Right cardiac atrium (tissue), 5 donors: ENCODE measurements at regions of chrX and their contacts with region 1.

Region 1: GRCh38 chrX:40266490-40267333 is 169.0 kb upstream of the BCOR start:
- DNase-seq: peak; percentile 69 to 88 (median 86)
- ATAC-seq: peak; percentile 88
- H3K4me3 ChIP-seq: peak overlapping the region; percentile 36
- H3K27ac ChIP-seq: peak overlapping the region; percentile 54
- H3K4me1 ChIP-seq: peaks cover 15% of the 10 kb centered on the region
- H3K27me3 ChIP-seq: no peaks in the 10 kb centered on the region

Region 2: GRCh38 chrX:39946822-39947221 is 319.9 kb before region 1 on chrX:
- intact Hi-C with region 1: no loop called
- DNase-seq: no peak
- ATAC-seq: no peak
- H3K4me3 ChIP-seq: no peak overlapping the region
- H3K27ac ChIP-seq: no peak overlapping the region
- H3K4me1 ChIP-seq: no peaks in the 10 kb centered on the region
- H3K27me3 ChIP-seq: no peaks in the 10 kb centered on the region

Region 3: GRCh38 chrX:40083120-40083978 is 183.4 kb before region 1 on chrX:
- intact Hi-C with region 1: loop called in 1 of 4 experiments (anchors 10 kb)
- DNase-seq: peak in 2 of 3 donors; percentile 73
- ATAC-seq: peak; percentile 46 to 53
- H3K4me3 ChIP-seq: peak overlapping the region; percentile 35
- H3K27ac ChIP-seq: no peak overlapping the region
- H3K4me1 ChIP-seq: peaks cover 18% of the 10 kb centered on the region
- H3K27me3 ChIP-seq: no peaks in the 10 kb centered on the region

Region 4: GRCh38 chrX:40169193-40170101 is 97.3 kb before region 1 on chrX:
- intact Hi-C with region 1: loop called in 2 of 4 experiments (anchors 10 kb)
- DNase-seq: peak in 2 of 3 donors; percentile 81
- ATAC-seq: peak in 1 of 2 donors; percentile 2
- H3K4me3 ChIP-seq: no peak overlapping the region
- H3K27ac ChIP-seq: no peak overlapping the region
- H3K4me1 ChIP-seq: peaks cover 5% of the 10 kb centered on the region
- H3K27me3 ChIP-seq: no peaks in the 10 kb centered on the region

Region 5: DNA sequence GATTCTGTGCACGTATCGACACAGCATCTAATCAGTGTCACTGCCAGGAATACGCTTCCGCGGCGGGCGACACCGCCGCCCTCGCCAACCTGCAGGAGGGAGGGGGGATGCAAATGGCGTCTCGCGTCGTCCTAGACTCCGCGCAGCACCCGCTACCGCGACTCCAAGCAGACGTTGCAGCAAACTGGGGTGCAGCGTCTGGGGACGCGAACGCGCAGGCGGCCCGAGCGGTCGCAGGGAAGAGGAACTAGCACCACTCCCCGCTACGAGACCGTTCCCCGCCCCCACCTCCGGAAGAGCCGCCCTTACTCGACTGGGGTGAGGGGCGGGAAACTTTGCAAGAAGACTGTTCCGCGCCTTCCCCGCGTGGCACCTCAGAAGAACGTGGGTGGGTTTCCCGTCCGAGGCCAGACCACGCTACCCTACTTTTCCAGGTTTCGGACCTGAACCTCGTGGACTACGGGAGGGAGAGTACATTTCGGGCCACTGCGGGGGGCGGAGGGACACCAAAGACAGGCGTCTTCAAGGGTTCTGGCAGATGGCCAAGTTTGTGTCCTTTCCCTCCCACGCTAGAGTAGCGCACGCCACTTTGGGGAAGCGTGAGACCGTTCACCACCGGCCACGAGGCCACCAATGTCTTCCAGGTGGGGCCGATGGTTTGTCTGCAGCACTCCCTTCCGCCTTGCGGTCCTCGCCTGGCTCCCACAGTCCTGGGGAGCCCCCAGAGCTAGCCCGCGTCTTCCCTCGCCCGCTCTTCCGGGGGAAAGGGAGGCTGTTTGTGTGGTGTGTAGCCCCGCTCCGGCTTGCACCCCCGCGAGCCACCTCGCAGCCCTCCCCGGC is 91.0 kb before region 1 on chrX:
- intact Hi-C with region 1: loop called in 3 of 4 experiments (anchors 5 to 10 kb)
- DNase-seq: peak; percentile 80 to 92 (median 91)
- ATAC-seq: peak; percentile 55 to 63
- H3K4me3 ChIP-seq: peak overlapping the region; percentile 73
- H3K27ac ChIP-seq: peak overlapping the region; percentile 98
- H3K4me1 ChIP-seq: peaks cover 5% of the 10 kb centered on the region
- H3K27me3 ChIP-seq: no peaks in the 10 kb centered on the region

Region 6: DNA sequence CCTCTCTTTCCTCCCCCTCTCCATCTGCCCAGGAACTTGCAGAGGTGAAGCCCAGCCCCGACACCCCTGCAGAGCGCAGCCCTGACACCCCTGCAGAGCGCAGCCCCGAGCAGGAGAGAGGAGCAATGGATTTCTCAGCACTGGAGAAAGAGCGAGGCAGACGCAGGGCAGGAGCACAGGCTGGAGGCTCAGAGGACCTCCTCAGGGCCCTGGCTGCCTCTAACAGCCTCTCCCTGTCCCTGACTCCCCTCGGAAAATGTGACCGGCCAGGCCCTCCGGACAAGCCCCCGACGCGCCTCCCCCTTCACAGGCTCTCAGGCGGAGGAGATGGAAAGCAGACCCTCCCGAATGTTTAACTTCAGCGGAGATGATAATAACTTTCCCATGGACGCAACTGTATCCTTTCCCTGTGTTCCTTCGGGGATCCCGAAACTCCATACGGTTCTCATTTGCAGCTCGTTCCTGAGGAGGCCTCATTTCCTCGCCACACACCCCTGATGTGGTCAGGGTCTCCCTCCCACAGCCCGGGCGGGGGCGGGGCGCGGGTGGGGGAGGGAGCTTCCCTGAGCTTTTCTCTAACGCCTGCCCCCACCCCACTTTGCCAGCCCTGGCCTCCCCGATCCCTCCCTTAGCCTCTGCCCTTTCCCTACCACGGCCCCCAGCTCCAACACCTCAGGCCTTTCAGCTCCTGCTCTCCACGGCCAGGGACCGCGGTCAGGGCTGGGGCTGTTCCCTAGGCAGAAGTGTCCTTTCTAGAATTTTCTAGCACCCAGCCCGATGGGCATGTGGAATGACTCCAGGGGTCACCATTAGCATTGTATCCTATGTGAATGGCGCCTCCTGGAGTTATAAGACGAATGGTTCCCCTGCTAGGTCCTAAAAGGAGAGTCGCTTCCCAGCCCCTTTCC is 32.1 kb after region 1 on chrX:
- intact Hi-C with region 1: no loop called
- DNase-seq: peak in 1 of 3 donors; percentile 38
- ATAC-seq: no peak
- H3K4me3 ChIP-seq: no peak overlapping the region
- H3K27ac ChIP-seq: no peak overlapping the region
- H3K4me1 ChIP-seq: no peaks in the 10 kb centered on the region
- H3K27me3 ChIP-seq: no peaks in the 10 kb centered on the region

Region 7: DNA sequence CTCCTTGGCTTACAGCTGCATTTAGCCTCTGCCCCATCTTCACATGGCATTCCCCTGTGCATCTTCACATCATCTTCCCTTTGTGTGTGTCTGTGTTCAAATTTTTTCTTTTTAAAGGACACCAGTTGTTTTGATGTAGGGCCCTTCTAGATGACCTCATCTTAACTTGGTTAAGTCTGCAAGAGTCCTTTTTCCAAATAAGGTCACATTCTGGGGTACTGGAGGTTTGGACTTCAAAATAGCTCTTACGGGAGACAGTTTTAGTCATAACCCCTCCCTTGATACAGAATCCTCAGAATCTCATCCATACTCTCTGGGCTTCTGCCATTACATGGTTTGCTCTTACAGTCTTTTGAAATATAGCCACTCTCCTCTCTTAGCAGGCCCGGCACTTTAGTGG is 82.5 kb after region 1 on chrX:
- intact Hi-C with region 1: no loop called
- DNase-seq: no peak
- ATAC-seq: no peak
- H3K4me3 ChIP-seq: no peak overlapping the region
- H3K27ac ChIP-seq: no peak overlapping the region
- H3K4me1 ChIP-seq: no peaks in the 10 kb centered on the region
- H3K27me3 ChIP-seq: no peaks in the 10 kb centered on the region